ENCODE measurements at regions of chr13 and their contacts with region 1.

Region 1: DNA sequence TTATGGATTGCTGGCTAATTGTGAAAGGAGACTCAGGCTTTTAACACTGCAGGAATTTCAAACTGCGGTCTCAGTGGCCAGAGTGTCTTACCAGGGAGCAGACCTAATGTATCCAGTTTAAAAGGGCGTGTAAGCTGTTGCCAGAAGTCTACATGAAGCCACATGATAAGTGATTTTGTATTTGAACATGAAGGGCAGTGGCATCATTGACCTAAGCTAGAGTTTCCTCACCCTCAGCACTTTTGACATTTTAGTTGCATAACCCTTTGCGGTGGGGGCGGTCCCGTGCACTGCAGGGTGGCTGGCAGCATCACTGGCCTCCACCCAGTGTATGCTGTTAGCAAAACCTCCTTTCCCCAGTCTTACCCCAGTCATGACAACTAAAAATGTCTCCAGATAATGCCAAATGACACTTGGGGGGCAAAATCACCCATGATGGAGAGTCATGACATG is 23.7 kb upstream of the GPR18 start:
- DNase-seq: peak; percentile 42 to 76 (median 63)
- ATAC-seq: peak; percentile 21 to 84 (median 66)
- H3K4me3 ChIP-seq: peak overlapping the region in 1 of 12 donors; percentile 21
- H3K27ac ChIP-seq: peak overlapping the region; percentile 9 to 91 (median 38)
- H3K4me1 ChIP-seq: peaks cover 0 to 100% (median 33%) of the 10 kb centered on the region in 12 donors
- H3K27me3 ChIP-seq: no peaks in the 10 kb centered on the region
- CTCF ChIP-seq: no peak
- POLR2A ChIP-seq: no peak

Region 2: GRCh38 chr13:99386911-99387788 is 105.3 kb after region 1 on chr13:
- intact Hi-C with region 1: loop called in 1 of 10 experiments (anchors 10 kb)
- DNase-seq: peak in 2 of 5 donors; percentile 54 to 76
- ATAC-seq: no peak
- H3K4me3 ChIP-seq: no peak overlapping the region
- H3K27ac ChIP-seq: peak overlapping the region in 1 of 12 donors; percentile 27
- H3K4me1 ChIP-seq: peaks cover 0 to 28% (median 0%) of the 10 kb centered on the region in 12 donors
- H3K27me3 ChIP-seq: no peaks in the 10 kb centered on the region
- CTCF ChIP-seq: peak in 10 of 12 donors; percentile 18 to 70 (median 46)
- POLR2A ChIP-seq: no peak

Region 3: GRCh38 chr13:99464441-99464949 is 182.7 kb after region 1 on chr13:
- intact Hi-C with region 1: no loop called
- DNase-seq: no peak
- ATAC-seq: no peak
- H3K4me3 ChIP-seq: peak overlapping the region in 1 of 12 donors; percentile 9
- H3K27ac ChIP-seq: peak overlapping the region in 1 of 12 donors; percentile 81
- H3K4me1 ChIP-seq: peaks cover 0 to 29% (median 0%) of the 10 kb centered on the region in 12 donors
- H3K27me3 ChIP-seq: no peaks in the 10 kb centered on the region
- CTCF ChIP-seq: no peak
- POLR2A ChIP-seq: no peak

Region 4: GRCh38 chr13:99477523-99477922 is 195.7 kb after region 1 on chr13:
- intact Hi-C with region 1: no loop called
- DNase-seq: no peak
- ATAC-seq: no peak
- H3K4me3 ChIP-seq: no peak overlapping the region
- H3K27ac ChIP-seq: no peak overlapping the region
- H3K4me1 ChIP-seq: no peaks in the 10 kb centered on the region
- H3K27me3 ChIP-seq: no peaks in the 10 kb centered on the region
- CTCF ChIP-seq: no peak
- POLR2A ChIP-seq: no peak

Region 5: GRCh38 chr13:100138859-100139491 is 857.1 kb after region 1 on chr13:
- intact Hi-C with region 1: no loop called
- DNase-seq: no peak
- ATAC-seq: no peak
- H3K4me3 ChIP-seq: no peak overlapping the region
- H3K27ac ChIP-seq: no peak overlapping the region
- H3K4me1 ChIP-seq: peaks cover 0 to 8% (median 0%) of the 10 kb centered on the region in 12 donors
- H3K27me3 ChIP-seq: no peaks in the 10 kb centered on the region
- CTCF ChIP-seq: no peak
- POLR2A ChIP-seq: no peak

Measured in heart left ventricle (tissue), 16 donors.